Vagina (tissue), 2 donors: ENCODE measurements at regions of chr16 and their contacts with region 1.

Region 1: DNA sequence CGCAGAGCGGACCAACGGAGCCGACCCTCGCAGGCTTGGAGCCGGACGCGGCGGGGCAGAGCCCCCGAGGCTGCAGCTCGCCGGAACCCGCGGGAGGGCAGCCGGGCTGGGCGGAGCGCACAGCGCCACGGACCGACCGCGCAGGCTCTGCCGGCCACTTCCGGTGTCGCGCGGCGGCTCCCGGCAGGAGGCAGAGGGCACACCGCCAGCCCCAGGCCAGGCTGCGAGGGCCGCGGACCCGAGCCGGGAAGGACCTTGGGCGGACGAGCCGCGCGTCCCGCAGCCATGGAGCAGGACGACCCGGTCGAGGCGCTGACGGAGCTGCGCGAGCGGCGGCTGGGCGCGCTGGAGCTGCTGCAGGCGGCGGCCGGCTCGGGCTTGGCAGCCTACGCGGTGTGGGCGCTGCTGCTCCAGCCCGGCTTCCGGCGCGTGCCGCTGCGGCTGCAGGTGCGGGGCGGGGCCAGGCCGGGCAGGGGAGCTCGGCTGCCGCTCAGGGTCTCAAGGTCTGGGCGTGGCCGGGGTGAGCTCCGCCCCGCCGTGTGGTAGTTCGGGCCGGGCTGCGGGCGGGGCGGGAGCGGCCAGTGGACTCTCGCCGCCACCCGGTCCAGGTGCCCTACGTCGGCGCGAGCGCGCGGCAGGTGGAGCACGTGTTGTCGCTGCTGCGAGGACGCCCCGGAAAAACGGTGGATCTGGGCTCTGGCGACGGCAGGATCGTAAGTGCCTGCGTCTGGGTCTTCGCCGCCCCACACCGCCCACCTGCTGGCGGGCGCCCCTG is at the start of gene ANTKMT:
- DNase-seq: no peak
- H3K4me3 ChIP-seq: peak within 1 kb of the TSS; percentile 70 to 92
- H3K27ac ChIP-seq: peak within 1 kb of the TSS; percentile 84
- H3K4me1 ChIP-seq: peaks cover 35% of the 10 kb centered on the region
- H3K27me3 ChIP-seq: no peaks in the 10 kb centered on the region
- CTCF ChIP-seq: peak in 1 of 3 experiments; percentile 17
- POLR2A ChIP-seq: peak in 1 of 2 donors; percentile 6
- total RNA-seq, gene ANTKMT: 26.0 TPM

Region 2: DNA sequence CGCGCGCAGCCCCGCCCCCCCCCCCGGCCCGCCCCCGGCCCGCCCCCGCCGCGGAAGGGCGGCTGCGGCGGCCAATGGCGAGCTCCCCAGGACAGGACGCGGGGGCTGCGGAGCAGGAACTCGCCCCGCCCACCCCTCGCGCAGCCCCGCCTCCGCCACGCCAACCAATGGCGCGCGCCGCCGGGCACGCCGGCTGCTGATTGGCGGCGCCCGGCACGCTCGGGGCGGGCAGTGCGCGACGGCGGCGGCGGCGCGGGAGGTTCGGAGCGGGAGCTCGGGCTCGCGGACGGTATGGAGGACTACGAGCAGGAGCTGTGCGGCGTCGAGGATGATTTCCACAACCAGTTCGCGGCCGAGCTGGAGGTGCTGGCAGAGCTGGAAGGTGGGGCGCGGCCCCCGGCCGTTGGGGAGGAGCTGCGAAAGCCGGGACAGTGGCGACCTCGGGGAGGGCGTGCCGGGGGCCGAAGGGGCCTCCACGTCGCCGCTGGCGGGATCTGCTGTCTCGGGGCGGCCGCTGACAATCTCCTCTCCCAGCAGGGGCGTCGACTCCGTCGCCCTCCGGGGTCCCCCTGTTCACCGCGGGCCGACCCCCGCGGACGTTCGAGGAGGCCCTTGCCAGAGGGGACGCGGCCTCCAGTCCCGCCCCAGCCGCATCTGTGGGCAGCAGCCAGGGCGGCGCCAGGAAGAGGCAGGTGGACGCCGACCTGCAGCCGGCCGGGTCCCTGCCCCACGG is 67.4 kb after region 1 on chr16 and contains the start of gene CHTF18:
- intact Hi-C with region 1: loop called (anchors 5 kb)
- DNase-seq: peak in 1 of 2 donors; percentile 93
- H3K4me3 ChIP-seq: peak within 1 kb of the TSS; percentile 98 to 99
- H3K27ac ChIP-seq: peak within 1 kb of the TSS; percentile 62
- H3K4me1 ChIP-seq: peaks cover 32% of the 10 kb centered on the region
- H3K27me3 ChIP-seq: no peaks in the 10 kb centered on the region
- CTCF ChIP-seq: no peak
- POLR2A ChIP-seq: no peak
- total RNA-seq, gene CHTF18: 4.9 TPM